Gastrocnemius medialis (tissue), 4 donors: ENCODE measurements at regions of chr3 and their contacts with region 1.

Region 1: GRCh38 chr3:120227710-120228347 is 57.2 kb downstream of the GPR156 start:
- DNase-seq: no peak
- ATAC-seq: no peak
- H3K4me3 ChIP-seq: no peak overlapping the region
- H3K27ac ChIP-seq: no peak overlapping the region
- H3K4me1 ChIP-seq: peaks cover 6 to 11% of the 10 kb centered on the region in 2 donors
- H3K27me3 ChIP-seq: no peaks in the 10 kb centered on the region
- CTCF ChIP-seq: no peak
- POLR2A ChIP-seq: no peak

Region 2: DNA sequence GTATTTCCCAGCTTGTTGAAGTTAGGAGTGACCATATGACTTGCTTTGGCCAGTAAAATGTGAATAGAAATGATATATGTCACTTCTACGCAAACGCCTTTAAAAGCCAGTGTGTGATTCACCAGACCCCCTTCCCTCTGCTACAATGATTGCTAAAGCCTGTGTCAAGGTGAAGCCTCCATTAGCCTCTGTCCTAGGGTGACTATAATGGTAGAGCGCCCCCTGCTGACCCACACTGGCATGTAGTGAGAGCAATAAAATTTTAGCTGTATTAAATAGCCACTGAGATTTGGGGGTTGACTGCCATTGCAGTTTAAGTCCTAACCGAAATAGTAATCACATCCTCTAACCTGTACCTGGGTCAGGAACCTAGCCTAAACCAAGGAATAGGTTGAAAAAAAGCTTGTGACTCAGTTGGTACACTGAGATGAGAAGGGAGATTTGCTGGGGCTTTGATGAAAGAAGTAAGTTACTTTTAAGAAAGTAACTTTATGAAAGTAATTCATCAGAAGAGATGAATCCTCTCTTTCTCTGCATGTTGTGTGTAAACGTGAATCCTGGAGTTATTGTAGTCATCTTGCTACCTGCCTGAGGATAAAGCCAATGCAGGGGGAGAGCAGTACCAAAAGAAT is 567.3 kb after region 1 on chr3:
- in situ Hi-C with region 1: loop called in 2 of 4 experiments (anchors 25 kb)
- intact Hi-C with region 1: no loop called
- DNase-seq: peak; percentile 40 to 64
- ATAC-seq: peak; percentile 90 to 94
- H3K4me3 ChIP-seq: no peak overlapping the region
- H3K27ac ChIP-seq: no peak overlapping the region
- H3K4me1 ChIP-seq: no peaks in the 10 kb centered on the region
- H3K27me3 ChIP-seq: no peaks in the 10 kb centered on the region
- CTCF ChIP-seq: peak; percentile 67 to 80 (median 77)
- POLR2A ChIP-seq: no peak

Region 3: DNA sequence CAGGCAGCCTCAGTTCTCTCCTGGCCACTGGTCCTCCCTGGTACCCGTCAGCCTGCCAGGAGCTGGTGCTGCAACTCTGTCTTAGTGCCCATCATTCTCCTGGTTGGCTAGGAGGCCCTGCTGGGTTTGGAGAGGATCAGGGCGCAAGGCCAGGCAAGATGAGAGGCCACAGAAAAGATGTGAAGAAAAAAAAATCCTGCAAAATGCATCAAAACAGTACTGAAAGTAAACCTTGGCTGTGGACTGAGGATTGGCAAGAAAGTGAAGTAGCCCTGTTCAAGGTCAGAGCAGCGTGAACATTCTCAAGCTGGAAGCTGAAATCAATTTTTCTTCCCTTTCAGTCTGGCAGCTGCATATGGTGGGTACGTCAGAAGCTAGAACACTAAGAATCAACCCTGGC is 588.9 kb after region 1 on chr3:
- in situ Hi-C with region 1: loop called in 1 of 4 experiments (anchors 25 kb)
- intact Hi-C with region 1: no loop called
- DNase-seq: no peak
- ATAC-seq: no peak
- H3K4me3 ChIP-seq: no peak overlapping the region
- H3K27ac ChIP-seq: no peak overlapping the region
- H3K4me1 ChIP-seq: no peaks in the 10 kb centered on the region
- H3K27me3 ChIP-seq: no peaks in the 10 kb centered on the region
- CTCF ChIP-seq: no peak
- POLR2A ChIP-seq: no peak